Activated T-helper 2 cell treated with anti-CD3 and anti-CD28 coated beads, Interferon-gamma antibody, Interleukin-2, Interleukin-4, amounts not matched to agents 10 μg/mL and 5 μg/mL and 100 μg/mL, durations not matched to agents 14 hours and 24 hours and 36 hours (primary cell): ENCODE measurements at regions of chr19 and their contacts with region 1.

Region 1: DNA sequence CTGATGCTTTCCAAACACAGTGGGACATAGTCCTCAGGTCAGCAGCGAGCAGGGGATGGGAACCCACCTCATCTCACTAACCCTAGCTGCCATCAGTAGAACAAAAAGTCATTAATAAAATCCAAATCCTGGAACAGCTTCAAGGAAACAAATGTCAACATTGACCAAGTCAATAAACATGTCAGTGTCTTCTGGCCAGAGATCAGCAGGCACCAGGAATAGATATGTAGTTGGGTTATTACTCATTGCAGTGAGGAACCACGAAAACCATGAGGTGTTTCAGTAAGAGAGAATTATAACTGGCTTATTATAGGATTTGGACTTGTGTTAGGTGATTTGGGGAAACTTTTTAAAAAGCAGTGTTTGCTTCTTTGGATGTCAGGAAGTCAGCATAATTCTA is 17.1 kb upstream of the CD33 start:
- DNase-seq: no peak
- H3K4me3 Mint-ChIP-seq: no peak overlapping the region
- H3K27ac Mint-ChIP-seq: no peak overlapping the region
- H3K4me1 Mint-ChIP-seq: peaks cover 30% of the 10 kb centered on the region
- H3K27me3 Mint-ChIP-seq: peaks cover 57% of the 10 kb centered on the region

Region 2: GRCh38 chr19:51166846-51167490 is 40.8 kb before region 1 on chr19:
- intact Hi-C with region 1: loop called (anchors 5 kb)
- DNase-seq: peak; percentile 29
- H3K4me3 Mint-ChIP-seq: peak overlapping the region; percentile 77
- H3K27ac Mint-ChIP-seq: peak overlapping the region; percentile 50
- H3K4me1 Mint-ChIP-seq: peaks cover 47% of the 10 kb centered on the region
- H3K27me3 Mint-ChIP-seq: peaks cover 14% of the 10 kb centered on the region

Region 3: GRCh38 chr19:51226067-51226466 is 18.3 kb after region 1 on chr19:
- intact Hi-C with region 1: loop called (anchors 2 kb)
- DNase-seq: no peak
- H3K4me3 Mint-ChIP-seq: peak overlapping the region; percentile 76
- H3K27ac Mint-ChIP-seq: peak overlapping the region; percentile 51
- H3K4me1 Mint-ChIP-seq: peaks cover 54% of the 10 kb centered on the region
- H3K27me3 Mint-ChIP-seq: peaks cover 40% of the 10 kb centered on the region